Caco-2 (cell line): ENCODE measurements at regions of chr9 and their contacts with region 1.

Region 1: DNA sequence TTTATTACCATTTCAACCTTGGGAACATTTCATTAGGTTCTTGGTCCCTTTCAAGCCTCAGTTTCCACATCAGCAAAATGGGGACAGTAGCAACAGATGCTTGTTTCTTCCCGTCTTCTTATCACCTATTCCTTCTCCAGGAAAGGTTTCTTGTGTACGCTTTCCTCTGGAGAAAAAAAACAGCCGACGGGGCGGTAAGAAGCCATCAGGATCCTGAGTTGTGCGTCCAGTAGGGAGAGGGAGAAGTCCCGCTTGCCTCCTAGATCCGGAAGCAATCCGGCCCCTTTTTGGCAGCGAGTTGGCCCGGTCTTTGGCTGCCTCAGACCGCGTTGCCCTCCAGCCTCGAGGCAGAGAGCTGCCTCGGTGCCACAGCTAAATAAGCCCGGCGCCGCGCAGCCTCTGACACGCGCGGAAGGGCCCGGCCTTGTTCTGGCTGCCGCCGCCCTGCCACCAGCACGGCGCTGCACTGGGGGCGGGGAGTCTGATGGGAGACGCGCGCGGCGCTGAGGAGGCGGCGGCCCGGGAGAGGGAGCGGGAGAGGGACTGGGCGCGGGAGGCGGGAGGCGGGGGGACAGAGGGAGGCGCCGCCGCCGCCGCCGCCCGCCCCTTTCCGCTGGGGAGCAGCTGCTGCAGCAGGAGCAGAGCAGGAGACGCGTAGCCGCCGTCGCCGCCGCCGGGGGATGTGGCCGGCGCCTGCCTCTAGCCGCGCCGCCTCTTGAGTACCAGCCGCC is at the start of gene SLC44A1:
- DNase-seq: peak; percentile 97 to 98
- H3K4me3 ChIP-seq: peak within 1 kb of the TSS; percentile 76
- H3K4me3 Mint-ChIP-seq: peak within 1 kb of the TSS; percentile 97
- H3K27ac Mint-ChIP-seq: peak within 1 kb of the TSS; percentile 91
- H3K4me1 ChIP-seq: peaks cover 14% of the 10 kb centered on the region
- H3K4me1 Mint-ChIP-seq: peaks cover 23% of the 10 kb centered on the region
- H3K27me3 ChIP-seq: no peaks in the 10 kb centered on the region
- H3K27me3 Mint-ChIP-seq: no peaks in the 10 kb centered on the region
- CTCF ChIP-seq: no peak
- total RNA-seq, gene SLC44A1: 45.8 and 46.3 TPM in 2 replicates

Region 2: GRCh38 chr9:104780799-104781395 is 463.3 kb before region 1 on chr9:
- CTCF ChIA-PET with region 1: no interaction called
- POLR2A ChIA-PET with region 1: no interaction called
- intact Hi-C with region 1: loop called (anchors 1 kb)
- DNase-seq: peak in 1 of 2 experiments; percentile 17
- H3K4me3 ChIP-seq: no peak overlapping the region
- H3K4me3 Mint-ChIP-seq: no peak overlapping the region
- H3K27ac Mint-ChIP-seq: no peak overlapping the region
- H3K4me1 ChIP-seq: no peaks in the 10 kb centered on the region
- H3K4me1 Mint-ChIP-seq: no peaks in the 10 kb centered on the region
- H3K27me3 ChIP-seq: no peaks in the 10 kb centered on the region
- H3K27me3 Mint-ChIP-seq: no peaks in the 10 kb centered on the region
- CTCF ChIP-seq: peak; percentile 21 to 29

Region 3: DNA sequence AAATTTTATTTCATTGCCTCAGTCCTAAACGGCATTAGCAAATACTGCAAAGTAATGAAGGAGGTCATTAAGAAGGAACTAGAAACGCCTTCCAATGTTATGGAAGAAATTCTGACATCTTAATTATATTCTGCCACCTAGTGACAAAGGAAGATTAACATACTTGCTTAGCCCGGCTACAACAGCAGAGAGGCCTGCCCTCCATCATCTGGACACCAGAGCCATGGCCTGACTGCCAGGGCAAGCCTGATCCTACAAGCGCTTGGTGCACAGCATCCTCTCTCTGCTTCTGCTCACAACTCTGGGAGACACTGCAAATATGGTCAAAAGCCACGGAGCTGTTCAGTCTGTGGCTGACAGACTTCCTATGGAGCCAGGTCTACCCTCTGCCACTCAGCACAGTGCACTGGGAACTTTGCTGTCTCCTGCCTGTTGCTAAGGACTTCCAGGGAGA is 87.0 kb before region 1 on chr9:
- CTCF ChIA-PET with region 1: no interaction called
- POLR2A ChIA-PET with region 1: no interaction called
- intact Hi-C with region 1: loop called (anchors 2 kb)
- DNase-seq: peak in 1 of 2 experiments; percentile 52
- H3K4me3 ChIP-seq: no peak overlapping the region
- H3K4me3 Mint-ChIP-seq: no peak overlapping the region
- H3K27ac Mint-ChIP-seq: no peak overlapping the region
- H3K4me1 ChIP-seq: 0 out of 2 replicates have a peak, but pooled peaks cover 4% of the 10 kb centered on the region
- H3K4me1 Mint-ChIP-seq: no peaks in the 10 kb centered on the region
- H3K27me3 ChIP-seq: no peaks in the 10 kb centered on the region
- H3K27me3 Mint-ChIP-seq: no peaks in the 10 kb centered on the region
- CTCF ChIP-seq: peak; percentile 32 to 35

Region 4: GRCh38 chr9:105318729-105319191 is 74.6 kb after region 1 on chr9:
- CTCF ChIA-PET with region 1: no interaction called
- POLR2A ChIA-PET with region 1: interaction called, 12 read pairs
- intact Hi-C with region 1: loop called (anchors 1 kb)
- DNase-seq: peak; percentile 63 to 65
- H3K4me3 ChIP-seq: no peak overlapping the region
- H3K4me3 Mint-ChIP-seq: peak overlapping the region; percentile 62
- H3K27ac Mint-ChIP-seq: peak overlapping the region; percentile 85
- H3K4me1 ChIP-seq: peaks cover 36% of the 10 kb centered on the region
- H3K4me1 Mint-ChIP-seq: peaks cover 32% of the 10 kb centered on the region
- H3K27me3 ChIP-seq: no peaks in the 10 kb centered on the region
- H3K27me3 Mint-ChIP-seq: no peaks in the 10 kb centered on the region
- CTCF ChIP-seq: no peak

Region 5: DNA sequence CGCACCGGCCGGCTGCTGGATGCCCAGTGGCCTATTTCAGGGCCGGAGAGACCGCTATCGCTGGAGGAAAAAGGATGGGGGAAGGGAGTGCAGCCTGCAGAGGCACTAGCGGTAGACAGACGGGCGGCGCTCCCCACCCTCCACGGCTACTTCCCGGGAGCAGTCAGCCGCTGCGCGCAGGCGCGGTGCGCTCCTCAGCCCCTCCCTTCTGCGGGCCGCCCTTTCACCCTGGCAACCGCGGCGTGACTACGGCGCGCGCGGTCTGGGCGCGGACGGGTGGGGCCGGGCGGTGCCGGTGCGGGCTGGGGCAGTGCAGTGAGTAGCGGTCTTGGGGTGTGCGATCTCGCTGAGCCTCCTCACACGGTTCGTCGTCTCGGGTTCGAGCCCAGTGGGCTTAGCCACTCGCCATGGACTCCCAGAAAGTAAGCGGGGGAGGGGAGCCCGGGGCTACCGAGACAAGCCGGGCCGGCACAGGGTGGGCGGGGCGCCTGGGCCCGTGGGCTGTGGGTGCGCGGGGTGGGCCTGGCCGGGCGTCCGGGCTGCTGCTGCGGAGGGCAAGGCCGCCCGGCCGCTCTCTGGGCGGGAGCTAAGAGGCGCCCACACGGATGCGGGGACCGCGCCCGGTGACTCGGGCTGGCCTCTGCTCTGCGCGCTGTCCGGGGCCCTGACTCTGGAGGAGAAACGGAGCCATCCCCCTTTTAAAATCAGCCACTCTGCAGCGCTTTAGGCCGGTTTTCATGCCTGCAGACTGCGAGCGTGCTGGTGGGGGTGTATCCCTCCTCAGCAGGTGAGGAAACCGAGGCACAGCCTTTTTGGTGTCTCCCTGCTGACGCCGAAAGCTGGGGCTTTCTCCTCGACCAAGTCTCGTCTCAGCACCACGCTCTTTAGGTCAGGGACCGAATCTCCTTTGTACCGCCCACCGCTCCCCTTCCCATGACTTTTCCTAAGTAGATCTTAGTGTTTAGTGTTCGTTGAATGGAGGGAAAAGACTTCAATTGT is 203.9 kb after region 1 on chr9 and contains the start of gene FSD1L:
- CTCF ChIA-PET with region 1: no interaction called
- POLR2A ChIA-PET with region 1: interaction called, 14 read pairs
- intact Hi-C with region 1: no loop called
- DNase-seq: peak; percentile 93 to 94
- H3K4me3 ChIP-seq: peak within 1 kb of the TSS; percentile 68
- H3K4me3 Mint-ChIP-seq: peak within 1 kb of the TSS; percentile 92
- H3K27ac Mint-ChIP-seq: peak within 1 kb of the TSS; percentile 85
- H3K4me1 ChIP-seq: peaks cover 12% of the 10 kb centered on the region
- H3K4me1 Mint-ChIP-seq: peaks cover 5% of the 10 kb centered on the region
- H3K27me3 ChIP-seq: no peaks in the 10 kb centered on the region
- H3K27me3 Mint-ChIP-seq: no peaks in the 10 kb centered on the region
- CTCF ChIP-seq: peak in 1 of 2 experiments; percentile 13
- total RNA-seq, gene FSD1L: 4.7 and 5.7 TPM in 2 replicates